AG04450 (cell line): ENCODE measurements at regions of chr12 and their contacts with region 1.

Region 1: GRCh38 chr12:110449799-110450497 is at the start of gene ARPC3:
- DNase-seq: peak; percentile 86
- H3K4me3 ChIP-seq: peak within 1 kb of the TSS; percentile 94
- H3K27ac ChIP-seq: peak within 1 kb of the TSS; percentile 91
- H3K27me3 ChIP-seq: no peaks in the 10 kb centered on the region
- CTCF ChIP-seq: peak; percentile 88
- polyA plus RNA-seq, gene ARPC3: 57.0 and 82.3 TPM in 2 replicates

Region 2: DNA sequence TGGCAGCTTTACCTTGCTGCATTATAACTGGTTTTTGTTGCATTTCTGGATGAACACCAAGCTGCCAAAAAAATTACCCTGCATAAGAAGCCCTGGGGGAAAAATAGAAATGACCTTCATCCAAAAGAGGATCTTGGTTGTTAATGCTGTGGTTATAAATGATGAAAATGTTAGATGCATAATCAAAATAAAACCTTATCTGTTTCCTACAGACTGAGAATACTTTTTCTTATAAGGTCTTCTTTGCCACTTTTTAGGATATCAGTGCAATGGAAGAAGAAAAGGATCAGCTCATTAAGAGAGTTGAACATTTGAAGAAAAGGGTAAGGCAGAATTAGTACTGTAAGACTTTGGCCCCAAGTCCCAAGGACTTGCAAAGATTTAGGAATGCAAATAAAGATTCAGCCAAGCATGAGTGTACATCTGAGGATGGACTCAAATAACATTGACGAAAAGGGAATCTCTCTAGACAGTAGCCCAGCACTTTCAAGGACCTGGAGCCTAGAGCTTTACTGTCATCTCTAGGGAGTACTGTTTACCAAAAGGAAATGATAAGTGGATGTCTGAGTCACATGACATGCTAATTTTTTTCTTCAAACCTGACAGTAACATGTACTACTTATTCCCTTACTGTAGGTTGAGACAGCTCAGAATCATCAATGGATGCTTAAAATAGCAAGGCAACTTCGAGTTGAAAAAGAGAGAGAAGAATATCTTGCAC is 315.1 kb before region 1 on chr12:
- CTCF ChIA-PET with region 1: no interaction called
- POLR2A ChIA-PET with region 1: no interaction called
- DNase-seq: peak; percentile 65
- H3K4me3 ChIP-seq: no peak overlapping the region
- H3K27ac ChIP-seq: no peak overlapping the region
- H3K27me3 ChIP-seq: no peaks in the 10 kb centered on the region
- CTCF ChIP-seq: no peak

Region 3: GRCh38 chr12:110468212-110469048 is 18.5 kb after region 1 on chr12 and contains the starts of genes FAM216A and GPN3:
- CTCF ChIA-PET with region 1: interaction called, 24 read pairs
- POLR2A ChIA-PET with region 1: interaction called, 29 read pairs
- DNase-seq: peak; percentile 96
- H3K4me3 ChIP-seq: peak within 1 kb of the TSS; percentile 98
- H3K27ac ChIP-seq: peak within 1 kb of the TSS; percentile 96
- H3K27me3 ChIP-seq: no peaks in the 10 kb centered on the region
- CTCF ChIP-seq: no peak
- polyA plus RNA-seq, gene FAM216A: 17.7 and 21.3 TPM in 2 replicates
- polyA plus RNA-seq, gene GPN3: 16.8 and 25.6 TPM in 2 replicates

Region 4: DNA sequence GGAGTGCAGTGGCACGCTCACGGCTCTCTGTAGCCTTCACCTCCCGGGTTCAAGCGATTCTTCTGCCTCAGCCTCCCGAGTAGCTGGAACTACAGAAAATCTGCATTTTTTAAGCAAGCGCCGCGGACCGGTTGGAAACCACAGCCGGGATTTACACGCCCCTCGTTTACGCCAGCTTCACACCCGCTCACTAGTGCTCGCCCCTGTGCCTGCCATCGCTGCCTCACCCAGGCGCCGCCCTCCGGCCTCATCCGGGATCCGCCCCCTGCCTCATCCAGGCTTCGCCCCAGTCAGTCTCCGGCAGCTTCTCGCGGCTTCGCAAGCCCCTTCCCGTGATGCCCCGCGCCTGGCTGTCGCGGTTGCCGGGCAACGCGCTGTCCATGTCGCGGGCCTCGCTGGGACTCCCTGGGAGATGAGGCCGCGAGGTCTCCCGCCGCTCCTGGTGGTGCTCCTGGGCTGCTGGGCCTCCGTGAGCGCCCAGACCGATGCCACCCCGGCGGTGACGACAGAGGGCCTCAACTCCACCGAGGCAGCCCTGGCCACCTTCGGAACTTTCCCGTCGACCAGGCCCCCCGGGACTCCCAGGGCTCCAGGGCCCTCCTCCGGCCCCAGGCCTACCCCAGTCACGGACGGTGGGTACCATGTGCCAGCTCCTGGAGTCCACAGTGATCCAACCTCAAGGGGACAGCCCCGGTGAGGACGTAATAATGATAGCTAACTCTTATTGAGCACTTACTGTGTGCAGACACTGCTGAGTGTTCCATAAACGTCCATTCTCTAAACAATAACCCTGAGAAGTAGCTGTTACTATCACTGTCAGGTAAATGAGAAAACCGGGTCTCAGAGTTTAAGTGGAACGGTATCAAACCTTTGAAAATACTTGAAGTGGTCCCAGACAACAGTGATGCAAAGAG is 164.1 kb after region 1 on chr12 and contains the start of gene TCTN1:
- CTCF ChIA-PET with region 1: interaction called, 10 read pairs
- POLR2A ChIA-PET with region 1: interaction called, 5 read pairs
- DNase-seq: peak; percentile 82
- H3K4me3 ChIP-seq: peak within 1 kb of the TSS; percentile 83
- H3K27ac ChIP-seq: no peak within 1 kb of the TSS
- H3K27me3 ChIP-seq: no peaks in the 10 kb centered on the region
- CTCF ChIP-seq: no peak
- polyA plus RNA-seq, gene TCTN1: 32.7 and 35.4 TPM in 2 replicates

Region 5: GRCh38 chr12:110888256-110888991 is 438.5 kb after region 1 on chr12:
- CTCF ChIA-PET with region 1: interaction called, 17 read pairs
- POLR2A ChIA-PET with region 1: interaction called, 3 read pairs
- DNase-seq: no peak
- H3K4me3 ChIP-seq: no peak overlapping the region
- H3K27ac ChIP-seq: no peak overlapping the region
- H3K27me3 ChIP-seq: no peaks in the 10 kb centered on the region
- CTCF ChIP-seq: no peak